ENCODE measurements at regions of chr10 and their contacts with region 1.

Region 1: GRCh38 chr10:102476466-102477141 is 25.3 kb upstream of the C10orf95 start:
- DNase-seq: no peak
- ATAC-seq: no peak
- H3K4me3 ChIP-seq: no peak overlapping the region
- H3K27ac ChIP-seq: no peak overlapping the region
- H3K4me1 ChIP-seq: no peaks in the 10 kb centered on the region
- H3K27me3 ChIP-seq: no peaks in the 10 kb centered on the region
- CTCF ChIP-seq: no peak
- POLR2A ChIP-seq: no peak

Region 2: GRCh38 chr10:101050208-101051069 is 1426.2 kb before region 1 on chr10:
- in situ Hi-C with region 1: no loop called
- intact Hi-C with region 1: no loop called
- DNase-seq: peak in 1 of 2 donors; percentile 57
- ATAC-seq: peak; percentile 40 to 50
- H3K4me3 ChIP-seq: peak overlapping the region; percentile 1 to 47 (median 24)
- H3K27ac ChIP-seq: no peak overlapping the region
- H3K4me1 ChIP-seq: peaks cover 12 to 21% of the 10 kb centered on the region in 2 donors
- H3K27me3 ChIP-seq: peaks cover 34 to 42% (median 40%) of the 10 kb centered on the region in 3 donors
- CTCF ChIP-seq: peak; percentile 61 to 92 (median 84)
- POLR2A ChIP-seq: no peak

Region 3: DNA sequence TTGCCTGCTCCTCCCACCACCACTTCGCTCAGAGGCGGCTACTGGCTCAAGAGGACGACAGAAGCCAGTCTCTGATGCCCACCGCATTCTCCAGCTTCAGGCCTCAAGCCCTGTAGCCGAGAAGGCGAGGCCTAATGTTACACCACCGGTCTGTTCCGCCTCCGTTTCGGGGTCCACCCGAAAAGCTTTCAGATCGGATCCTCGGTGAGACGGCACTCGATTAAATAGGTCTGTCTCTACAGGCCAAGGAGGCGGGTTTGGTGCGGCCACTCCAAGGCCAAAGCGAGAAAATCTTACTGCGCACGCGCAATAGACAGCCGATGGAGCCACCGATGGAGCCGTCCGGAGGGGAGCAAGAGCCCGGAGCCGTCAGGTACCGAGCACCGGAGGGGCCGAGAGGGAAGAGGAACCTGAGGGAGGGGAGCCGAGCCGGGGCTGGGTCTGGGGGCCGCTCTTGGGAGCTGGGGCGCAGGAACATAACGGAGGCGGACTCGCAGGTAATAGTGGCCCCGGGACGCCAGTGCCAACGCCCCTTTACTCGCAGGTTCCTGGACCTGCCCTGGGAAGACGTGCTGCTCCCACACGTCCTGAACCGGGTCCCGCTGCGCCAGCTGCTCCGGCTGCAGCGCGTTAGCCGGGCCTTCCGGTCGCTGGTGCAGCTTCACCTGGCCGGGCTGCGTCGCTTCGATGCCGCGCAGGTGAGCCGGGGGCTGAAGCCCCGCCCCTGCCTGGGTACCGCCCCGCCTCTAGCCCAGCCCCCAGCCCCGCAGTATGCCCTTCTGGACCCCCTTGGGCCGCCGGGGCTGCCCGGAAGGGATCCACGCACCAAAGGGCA is 55.6 kb before region 1 on chr10 and contains the start of gene FBXL15:
- in situ Hi-C with region 1: no loop called
- intact Hi-C with region 1: loop called (anchors 5 kb)
- DNase-seq: peak; percentile 96
- ATAC-seq: peak; percentile 90 to 94
- H3K4me3 ChIP-seq: peak within 1 kb of the TSS; percentile 82 to 92 (median 87)
- H3K27ac ChIP-seq: peak within 1 kb of the TSS; percentile 85 to 97 (median 94)
- H3K4me1 ChIP-seq: peaks cover 27 to 30% of the 10 kb centered on the region in 2 donors
- H3K27me3 ChIP-seq: peaks cover 19 to 29% (median 23%) of the 10 kb centered on the region in 3 donors
- CTCF ChIP-seq: peak in 2 of 5 experiments; percentile 22 to 41
- POLR2A ChIP-seq: peak; percentile 30 to 39
- total RNA-seq, gene FBXL15: 14.2 to 34.8 (median 21.0) TPM

Region 4: DNA sequence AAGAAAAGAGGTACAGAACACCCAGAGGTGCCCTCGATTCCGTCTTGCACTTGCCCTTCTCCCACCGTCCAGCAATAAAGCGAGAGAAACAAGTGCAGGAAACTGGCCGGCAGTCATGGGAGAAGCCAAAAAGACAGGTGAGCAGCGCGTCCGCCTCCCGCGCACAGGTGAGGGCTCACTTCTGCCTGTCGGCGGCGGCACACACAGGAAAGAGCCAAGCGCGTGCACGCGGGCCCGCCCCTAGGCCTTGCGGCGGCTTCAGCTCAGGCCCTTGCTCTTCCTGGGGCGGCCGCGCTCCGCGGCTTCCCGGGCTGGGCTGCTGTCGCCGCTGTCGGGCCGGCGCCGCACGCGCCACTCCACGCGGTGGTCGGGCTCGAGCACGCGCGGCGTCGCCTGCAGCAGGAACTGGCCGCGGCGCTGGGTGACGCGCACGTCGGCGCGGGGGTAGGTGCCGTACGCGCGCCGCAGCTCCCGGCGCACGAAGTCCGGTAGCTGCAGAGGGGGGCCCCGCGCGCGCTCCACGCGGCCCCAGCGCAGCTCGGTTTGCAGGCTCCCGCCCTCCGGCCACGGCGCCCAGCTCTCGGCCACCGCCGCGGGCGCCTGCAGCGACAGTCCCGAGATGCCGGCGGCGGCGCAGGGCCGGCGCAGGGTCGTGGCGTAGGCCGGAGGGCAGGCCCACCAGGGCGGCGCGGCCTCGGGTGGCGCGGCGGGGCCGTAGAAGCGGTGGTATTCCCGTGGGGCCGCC is 26.2 kb before region 1 on chr10:
- in situ Hi-C with region 1: no loop called
- intact Hi-C with region 1: loop called (anchors 1 kb)
- DNase-seq: peak; percentile 42 to 75
- ATAC-seq: peak; percentile 84 to 86
- H3K4me3 ChIP-seq: peak overlapping the region; percentile 42 to 98 (median 74)
- H3K27ac ChIP-seq: peak overlapping the region; percentile 75 to 93 (median 86)
- H3K4me1 ChIP-seq: peaks cover 10 to 16% of the 10 kb centered on the region in 2 donors
- H3K27me3 ChIP-seq: no peaks in the 10 kb centered on the region
- CTCF ChIP-seq: peak in 2 of 5 experiments; percentile 6 to 12
- POLR2A ChIP-seq: peak; percentile 59 to 72

Region 5: GRCh38 chr10:102461187-102462054 is 15.2 kb before region 1 on chr10:
- in situ Hi-C with region 1: no loop called
- intact Hi-C with region 1: loop called (anchors 2 kb)
- DNase-seq: peak; percentile 85 to 93
- ATAC-seq: peak; percentile 89 to 94
- H3K4me3 ChIP-seq: peak overlapping the region; percentile 54 to 77 (median 64)
- H3K27ac ChIP-seq: peak overlapping the region; percentile 44 to 74 (median 62)
- H3K4me1 ChIP-seq: peaks cover 15 to 19% of the 10 kb centered on the region in 2 donors
- H3K27me3 ChIP-seq: no peaks in the 10 kb centered on the region
- CTCF ChIP-seq: no peak
- POLR2A ChIP-seq: peak; percentile 70 to 71

Region 6: DNA sequence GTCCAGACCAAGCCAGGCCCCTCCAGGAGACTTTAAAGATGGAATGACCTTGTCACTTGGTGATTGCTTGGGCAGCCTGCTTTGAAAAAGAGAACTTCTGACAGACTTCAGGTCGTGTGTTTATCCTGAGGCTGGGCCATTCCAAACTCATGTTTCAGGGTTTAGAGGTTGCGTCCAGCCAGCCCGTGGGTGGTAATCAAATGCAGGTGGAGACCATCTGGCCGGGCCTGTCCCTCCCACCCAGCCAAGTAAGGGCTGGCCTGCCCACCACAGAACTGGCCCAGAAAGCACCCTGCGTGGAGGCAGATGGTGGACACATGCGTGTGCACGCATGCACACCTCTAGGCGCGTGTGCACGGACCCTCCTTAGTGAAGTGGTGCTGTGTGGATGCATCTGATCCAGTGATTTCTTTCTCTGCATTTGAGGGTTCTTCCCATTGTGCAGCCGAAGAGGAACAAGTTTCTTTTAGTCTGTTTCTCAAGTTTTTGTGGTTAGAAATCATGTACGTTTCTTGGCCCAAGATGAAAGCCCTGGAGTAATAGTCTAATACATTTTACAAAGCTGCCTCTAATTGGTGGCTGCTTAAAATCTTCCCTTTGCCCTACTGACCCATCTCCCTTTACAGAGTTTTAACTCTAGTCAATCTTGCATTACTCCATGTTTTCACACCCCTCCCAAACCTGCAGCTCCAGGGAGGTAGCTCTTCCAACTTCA is 70.2 kb after region 1 on chr10:
- in situ Hi-C with region 1: no loop called
- intact Hi-C with region 1: no loop called
- DNase-seq: no peak
- ATAC-seq: no peak
- H3K4me3 ChIP-seq: no peak overlapping the region
- H3K27ac ChIP-seq: no peak overlapping the region
- H3K4me1 ChIP-seq: peaks cover 16 to 26% of the 10 kb centered on the region in 2 donors
- H3K27me3 ChIP-seq: no peaks in the 10 kb centered on the region
- CTCF ChIP-seq: no peak
- POLR2A ChIP-seq: no peak

Measured in gastrocnemius medialis (tissue), 4 donors.